ENCODE measurements at regions of chr6 and their contacts with region 1.

Region 1: DNA sequence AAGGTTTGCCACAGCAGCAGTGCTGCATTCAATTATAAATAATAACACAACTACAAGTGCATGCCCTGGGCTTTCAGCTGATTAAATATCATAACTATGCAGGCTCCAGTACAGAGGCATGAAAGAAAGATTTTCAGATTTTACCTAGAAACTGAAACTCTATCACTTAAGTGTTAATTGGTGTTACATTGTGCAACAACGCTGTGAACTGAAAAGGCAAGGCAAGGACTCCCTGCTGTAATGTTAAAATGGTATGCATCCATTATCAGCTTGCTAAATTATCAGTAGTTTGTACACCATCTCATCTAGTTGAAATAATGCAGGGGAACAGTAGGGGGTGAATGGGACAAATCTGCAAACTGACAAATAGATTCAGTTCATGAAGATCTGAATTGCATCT is 976.7 kb upstream of the MANEA start:
- DNase-seq: no peak
- H3K4me3 ChIP-seq: no peak overlapping the region
- H3K27ac ChIP-seq: no peak overlapping the region
- H3K4me1 ChIP-seq: no peaks in the 10 kb centered on the region
- H3K27me3 ChIP-seq: no peaks in the 10 kb centered on the region
- CTCF ChIP-seq: no peak
- POLR2A ChIP-seq: no peak

Region 2: DNA sequence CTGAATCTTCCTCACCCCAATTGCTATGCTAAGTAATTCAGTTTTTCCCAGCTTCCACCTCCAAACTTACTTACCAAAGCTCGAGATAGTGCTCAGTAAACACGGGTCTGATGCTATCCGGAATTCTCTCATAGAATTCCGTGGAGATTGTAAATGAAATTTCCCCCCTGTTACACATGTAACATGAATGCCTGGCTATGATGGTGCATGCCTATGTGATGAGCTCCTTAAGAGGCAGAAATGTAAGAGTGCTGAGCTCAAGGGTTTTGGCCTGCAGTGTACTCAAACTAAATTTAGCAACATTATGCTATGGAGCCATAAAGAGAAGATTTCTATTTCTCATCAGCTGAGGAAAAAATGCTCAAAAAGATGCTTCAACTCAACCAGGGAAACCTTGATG is 1281.7 kb after region 1 on chr6:
- intact Hi-C with region 1: loop called (anchors 5 kb)
- DNase-seq: no peak
- H3K4me3 ChIP-seq: no peak overlapping the region
- H3K27ac ChIP-seq: no peak overlapping the region
- H3K4me1 ChIP-seq: no peaks in the 10 kb centered on the region
- H3K27me3 ChIP-seq: no peaks in the 10 kb centered on the region
- CTCF ChIP-seq: no peak
- POLR2A ChIP-seq: no peak

Measured in breast epithelium (tissue), 4 donors.